ENCODE measurements at regions of chr2 and their contacts with region 1.

Region 1: DNA sequence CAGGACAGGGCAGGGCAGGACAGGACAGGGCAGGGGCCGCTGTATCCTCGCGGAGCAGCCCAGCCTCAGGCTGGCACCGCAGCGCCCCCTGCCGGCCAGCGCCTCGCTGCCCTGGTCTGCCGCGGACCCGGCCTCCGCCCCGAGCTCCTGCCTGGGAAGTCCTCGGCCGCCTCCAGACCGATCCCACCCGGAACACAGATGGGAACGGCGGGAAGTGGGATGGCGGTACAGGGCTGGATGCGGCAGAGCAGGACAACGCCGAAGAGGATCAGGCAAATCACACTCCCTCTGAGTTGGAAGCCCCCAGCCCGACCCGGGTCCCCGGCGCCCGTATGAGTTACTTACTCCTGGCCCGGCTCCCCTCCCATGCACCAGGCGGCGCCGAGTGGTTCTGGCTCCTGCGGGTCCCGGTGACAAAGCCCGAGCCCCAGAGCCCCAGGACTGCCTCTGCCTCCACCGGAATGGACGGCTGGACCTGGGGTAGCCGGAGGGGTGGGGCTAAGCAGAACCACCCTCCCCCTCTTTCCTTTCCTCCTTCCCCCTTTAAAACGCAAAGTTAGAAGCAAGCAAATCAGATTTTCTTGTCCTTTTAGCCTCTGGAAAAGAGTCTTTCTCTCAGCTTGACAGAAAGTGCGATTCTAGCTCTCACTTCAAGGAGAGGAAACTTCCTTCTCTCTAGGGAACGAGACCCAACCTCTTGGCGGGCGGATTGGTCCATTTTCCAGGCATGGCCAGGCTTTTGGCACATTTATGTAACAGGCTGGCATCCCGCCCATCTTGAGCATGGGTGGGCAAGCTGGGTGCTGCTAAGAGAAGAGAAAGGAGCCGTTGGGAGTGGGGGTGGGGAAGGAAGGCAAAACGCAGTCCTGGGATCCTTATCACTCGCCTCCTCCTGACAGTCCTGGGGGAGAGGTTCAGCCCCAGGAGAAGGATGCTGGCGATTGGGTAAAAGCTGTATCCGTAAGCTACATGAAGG is at the start of gene TP53I3:
- DNase-seq: peak; percentile 84
- ATAC-seq: peak; percentile 97
- H3K4me3 Mint-ChIP-seq: peak within 1 kb of the TSS; percentile 88
- H3K27ac Mint-ChIP-seq: peak within 1 kb of the TSS; percentile 92
- H3K4me1 Mint-ChIP-seq: peaks cover 19% of the 10 kb centered on the region
- H3K27me3 Mint-ChIP-seq: no peaks in the 10 kb centered on the region
- total RNA-seq, gene TP53I3: 5.3 to 6.5 TPM

Region 2: GRCh38 chr2:23988371-23988770 is 96.3 kb before region 1 on chr2:
- CTCF ChIA-PET with region 1: interaction called, 10 read pairs
- POLR2A ChIA-PET with region 1: no interaction called
- DNase-seq: no peak
- ATAC-seq: peak; percentile 64
- H3K4me3 Mint-ChIP-seq: no peak overlapping the region
- H3K27ac Mint-ChIP-seq: no peak overlapping the region
- H3K4me1 Mint-ChIP-seq: no peaks in the 10 kb centered on the region
- H3K27me3 Mint-ChIP-seq: no peaks in the 10 kb centered on the region

Region 3: GRCh38 chr2:24046930-24047702 is 37.6 kb before region 1 on chr2 and contains the start of gene WDCP:
- CTCF ChIA-PET with region 1: interaction called, 12 read pairs
- POLR2A ChIA-PET with region 1: interaction called, 8 read pairs
- DNase-seq: peak; percentile 98
- ATAC-seq: peak; percentile 99
- H3K4me3 Mint-ChIP-seq: peak within 1 kb of the TSS; percentile 90
- H3K27ac Mint-ChIP-seq: peak within 1 kb of the TSS; percentile 88
- H3K4me1 Mint-ChIP-seq: peaks cover 37% of the 10 kb centered on the region
- H3K27me3 Mint-ChIP-seq: peaks cover 5% of the 10 kb centered on the region
- total RNA-seq, gene WDCP: 23.2 to 24.1 TPM

Region 4: GRCh38 chr2:24123195-24123921 is 38.7 kb after region 1 on chr2 and contains the starts of genes FAM228B and PFN4:
- CTCF ChIA-PET with region 1: interaction called, 31 read pairs
- POLR2A ChIA-PET with region 1: interaction called, 8 read pairs
- DNase-seq: peak; percentile 78
- ATAC-seq: peak; percentile 94
- H3K4me3 Mint-ChIP-seq: peak within 1 kb of the TSS; percentile 79
- H3K27ac Mint-ChIP-seq: peak within 1 kb of the TSS; percentile 66
- H3K4me1 Mint-ChIP-seq: peaks cover 14% of the 10 kb centered on the region
- H3K27me3 Mint-ChIP-seq: no peaks in the 10 kb centered on the region
- total RNA-seq, gene FAM228B: 6.2 to 6.9 TPM
- total RNA-seq, gene PFN4: 0.26 TPM in 1 of 2 experiments, not detected in the other

Region 5: GRCh38 chr2:24164125-24164973 is 79.7 kb after region 1 on chr2:
- CTCF ChIA-PET with region 1: interaction called, 33 read pairs
- POLR2A ChIA-PET with region 1: no interaction called
- DNase-seq: peak; percentile 63
- ATAC-seq: peak; percentile 88
- H3K4me3 Mint-ChIP-seq: no peak overlapping the region
- H3K27ac Mint-ChIP-seq: no peak overlapping the region
- H3K4me1 Mint-ChIP-seq: no peaks in the 10 kb centered on the region
- H3K27me3 Mint-ChIP-seq: peaks cover 5% of the 10 kb centered on the region

Region 6: DNA sequence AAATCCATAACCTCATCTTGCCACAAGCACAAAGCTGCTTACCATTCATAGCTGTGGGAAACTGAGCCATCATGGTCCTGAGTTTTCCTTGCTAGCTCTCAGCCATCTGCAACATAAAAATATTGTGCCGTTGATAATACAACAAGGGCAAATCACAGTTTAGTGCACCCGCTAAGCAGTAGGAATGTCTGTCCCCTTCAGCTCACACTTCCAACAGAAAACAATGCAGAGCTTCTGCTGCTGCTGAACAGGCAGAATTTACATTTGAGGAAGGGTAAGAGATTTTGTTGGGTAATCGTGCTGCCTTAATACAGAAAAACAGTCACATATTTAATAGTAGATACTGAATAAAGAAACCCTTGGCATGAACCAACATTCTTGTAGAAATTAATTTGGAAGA is 243.3 kb after region 1 on chr2:
- CTCF ChIA-PET with region 1: no interaction called
- POLR2A ChIA-PET with region 1: no interaction called
- DNase-seq: no peak
- ATAC-seq: no peak
- H3K4me3 Mint-ChIP-seq: no peak overlapping the region
- H3K27ac Mint-ChIP-seq: no peak overlapping the region
- H3K4me1 Mint-ChIP-seq: peaks cover 10% of the 10 kb centered on the region
- H3K27me3 Mint-ChIP-seq: no peaks in the 10 kb centered on the region